ENCODE measurements at regions of chr19 and their contacts with region 1.

Region 1: GRCh38 chr19:44576843-44577565 is 36.4 kb upstream of the IGSF23 start:
- DNase-seq: no peak
- H3K4me3 ChIP-seq: no peak overlapping the region
- H3K4me3 Mint-ChIP-seq: no peak overlapping the region
- H3K27ac ChIP-seq: no peak overlapping the region
- H3K27ac Mint-ChIP-seq: no peak overlapping the region
- H3K4me1 ChIP-seq: no peaks in the 10 kb centered on the region
- H3K4me1 Mint-ChIP-seq: no peaks in the 10 kb centered on the region
- H3K27me3 ChIP-seq: no peaks in the 10 kb centered on the region
- H3K27me3 Mint-ChIP-seq: peaks cover 0 to 2% of the 10 kb centered on the region in 2 donors

Region 2: DNA sequence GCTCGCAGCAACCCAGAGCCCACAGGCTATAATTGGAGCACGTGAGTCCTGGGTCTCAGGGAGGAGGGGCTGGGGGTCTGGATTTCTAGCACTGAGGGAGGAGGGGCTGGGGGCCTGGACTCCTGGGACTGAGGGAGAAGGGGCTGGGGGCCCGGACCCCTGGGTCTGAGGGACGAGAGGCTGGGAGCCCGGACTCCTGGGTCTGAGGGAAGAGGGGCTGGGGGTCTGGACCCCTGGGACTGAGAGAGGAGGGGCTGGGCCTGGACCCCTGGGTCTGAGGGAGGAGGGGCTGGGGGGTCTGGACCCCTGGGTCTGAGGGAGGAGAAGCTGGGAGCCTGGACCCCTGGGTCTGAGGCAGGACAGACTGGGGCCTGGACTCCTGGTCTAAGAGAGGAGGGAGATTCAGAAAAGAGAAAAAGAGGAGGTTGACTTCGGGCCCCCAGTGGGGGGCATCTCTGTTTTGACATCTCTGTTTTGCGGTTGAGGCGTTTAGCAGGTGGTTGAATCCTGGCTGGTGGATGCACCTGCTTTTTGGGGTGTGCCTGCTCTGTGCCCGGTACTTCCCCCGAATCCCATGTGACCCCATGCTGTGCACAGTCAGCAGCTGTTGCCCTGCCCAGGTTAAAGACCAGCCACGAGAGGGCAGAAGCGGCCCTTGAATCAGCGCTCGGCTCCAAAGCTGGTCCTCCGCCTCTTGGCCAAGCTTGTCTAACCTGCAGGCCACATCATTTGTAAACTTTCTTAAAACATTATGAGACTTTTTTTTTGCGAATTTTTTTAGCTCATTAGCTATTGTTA is 77.2 kb after region 1 on chr19:
- CTCF ChIA-PET with region 1: interaction called, 3 read pairs
- POLR2A ChIA-PET with region 1: no interaction called
- intact Hi-C with region 1: loop called (anchors 1 kb)
- DNase-seq: peak; percentile 50 to 74 (median 64)
- H3K4me3 ChIP-seq: no peak overlapping the region
- H3K4me3 Mint-ChIP-seq: no peak overlapping the region
- H3K27ac ChIP-seq: no peak overlapping the region
- H3K27ac Mint-ChIP-seq: peak overlapping the region in 2 of 7 donors; percentile 41 to 50
- H3K4me1 ChIP-seq: peaks cover 5% of the 10 kb centered on the region
- H3K4me1 Mint-ChIP-seq: peaks cover 1 to 13% (median 8%) of the 10 kb centered on the region in 4 donors
- H3K27me3 ChIP-seq: no peaks in the 10 kb centered on the region
- H3K27me3 Mint-ChIP-seq: peaks cover 1 to 5% of the 10 kb centered on the region in 2 donors

Region 3: GRCh38 chr19:44782729-44783128 is 205.7 kb after region 1 on chr19:
- CTCF ChIA-PET with region 1: no interaction called
- POLR2A ChIA-PET with region 1: no interaction called
- intact Hi-C with region 1: no loop called
- DNase-seq: no peak
- H3K4me3 ChIP-seq: no peak overlapping the region
- H3K4me3 Mint-ChIP-seq: no peak overlapping the region
- H3K27ac ChIP-seq: no peak overlapping the region
- H3K27ac Mint-ChIP-seq: no peak overlapping the region
- H3K4me1 ChIP-seq: peaks cover 3% of the 10 kb centered on the region
- H3K4me1 Mint-ChIP-seq: peaks cover 4 to 7% (median 6%) of the 10 kb centered on the region in 4 donors
- H3K27me3 ChIP-seq: no peaks in the 10 kb centered on the region
- H3K27me3 Mint-ChIP-seq: peaks cover 0 to 7% of the 10 kb centered on the region in 2 donors

Region 4: GRCh38 chr19:44925114-44925891 is 348.3 kb after region 1 on chr19:
- CTCF ChIA-PET with region 1: no interaction called
- POLR2A ChIA-PET with region 1: no interaction called
- intact Hi-C with region 1: no loop called
- DNase-seq: no peak
- H3K4me3 ChIP-seq: no peak overlapping the region
- H3K4me3 Mint-ChIP-seq: no peak overlapping the region
- H3K27ac ChIP-seq: no peak overlapping the region
- H3K27ac Mint-ChIP-seq: no peak overlapping the region
- H3K4me1 ChIP-seq: no peaks in the 10 kb centered on the region
- H3K4me1 Mint-ChIP-seq: peaks cover 0 to 9% (median 4%) of the 10 kb centered on the region in 4 donors
- H3K27me3 ChIP-seq: no peaks in the 10 kb centered on the region
- H3K27me3 Mint-ChIP-seq: peaks cover 10 to 19% of the 10 kb centered on the region in 2 donors

Measured in CD4-positive, alpha-beta memory T cell (primary cell).